Sigmoid colon (tissue), 7 donors: ENCODE measurements at regions of chr2 and their contacts with region 1.

Region 1: DNA sequence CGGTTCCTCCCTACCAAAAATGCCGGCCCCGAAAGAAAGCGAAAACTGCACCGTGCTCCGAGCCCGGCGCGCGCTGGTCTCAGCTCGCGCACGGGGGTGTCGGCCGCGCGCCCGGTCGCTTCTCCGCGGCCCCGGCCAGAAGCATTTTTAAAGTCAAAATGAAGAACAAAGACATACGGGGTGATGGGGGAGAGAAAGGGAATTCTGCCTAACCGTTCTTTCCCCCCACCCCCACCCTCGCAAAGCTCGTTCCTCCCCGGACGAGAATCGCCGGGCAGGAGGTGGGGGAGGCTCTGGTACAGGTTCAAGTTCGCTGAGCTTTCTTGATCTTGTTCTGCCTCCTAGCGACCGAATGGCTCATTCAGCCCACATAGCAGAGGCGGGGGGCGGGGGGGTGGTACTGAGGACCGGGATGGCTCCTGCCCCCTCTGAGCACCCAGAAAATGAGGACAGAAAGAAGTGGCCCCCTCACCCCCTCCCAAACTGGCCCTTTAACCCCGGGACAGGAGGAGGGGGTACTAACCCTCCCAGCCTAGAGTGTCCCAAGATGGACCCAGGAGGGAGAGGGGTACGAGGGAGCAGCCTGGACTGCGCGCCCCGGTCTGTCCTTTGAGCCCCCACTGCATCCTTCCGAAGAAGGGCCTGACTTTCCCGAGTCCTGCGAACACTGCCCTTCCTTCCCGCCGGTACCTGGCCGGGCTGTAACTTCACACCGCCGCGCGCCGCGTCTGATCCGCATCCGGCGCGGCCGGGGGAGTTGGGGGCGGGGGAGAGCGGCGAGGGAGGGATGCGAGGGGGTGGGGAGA is 3.1 kb downstream of the BCL11A start:
- DNase-seq: peak; percentile 89
- H3K4me3 ChIP-seq: peak overlapping the region; percentile 68 to 83 (median 76)
- H3K27ac ChIP-seq: peak overlapping the region; percentile 76 to 95 (median 87)
- H3K4me1 ChIP-seq: peaks cover 0 to 73% (median 48%) of the 10 kb centered on the region in 4 donors
- H3K27me3 ChIP-seq: peaks cover 0 to 34% (median 0%) of the 10 kb centered on the region in 3 donors
- CTCF ChIP-seq: peak in 3 of 4 experiments; percentile 59 to 70 (median 63)
- EP300 ChIP-seq: no peak
- POLR2A ChIP-seq: no peak

Region 2: DNA sequence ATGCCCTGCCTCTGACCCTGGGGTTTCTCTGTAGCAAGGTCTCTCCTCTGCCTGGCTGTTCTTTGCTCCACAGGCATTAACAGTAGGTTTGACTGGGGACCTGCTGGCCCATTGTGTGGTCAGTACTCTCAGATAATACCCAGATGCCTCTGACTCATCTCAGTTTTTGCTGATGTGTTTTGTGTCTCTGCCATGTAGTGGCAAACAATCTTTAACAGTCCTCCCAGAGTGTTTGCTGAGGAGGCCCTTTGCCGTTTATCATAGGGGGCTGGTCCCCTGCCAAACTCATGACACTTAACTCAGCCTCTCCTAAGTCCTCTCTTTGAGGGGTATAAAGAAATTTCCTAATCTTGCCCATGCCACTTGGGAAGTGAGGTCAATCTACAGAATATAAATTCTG is 1515.5 kb before region 1 on chr2:
- intact Hi-C with region 1: loop called (anchors 5 kb)
- DNase-seq: peak; percentile 72
- H3K4me3 ChIP-seq: no peak overlapping the region
- H3K27ac ChIP-seq: peak overlapping the region in 3 of 4 donors; percentile 29 to 71 (median 50)
- H3K4me1 ChIP-seq: peaks cover 2 to 23% (median 15%) of the 10 kb centered on the region in 4 donors
- H3K27me3 ChIP-seq: no peaks in the 10 kb centered on the region
- CTCF ChIP-seq: no peak
- EP300 ChIP-seq: peak in 2 of 4 donors; percentile 47 to 75
- POLR2A ChIP-seq: no peak

Region 3: DNA sequence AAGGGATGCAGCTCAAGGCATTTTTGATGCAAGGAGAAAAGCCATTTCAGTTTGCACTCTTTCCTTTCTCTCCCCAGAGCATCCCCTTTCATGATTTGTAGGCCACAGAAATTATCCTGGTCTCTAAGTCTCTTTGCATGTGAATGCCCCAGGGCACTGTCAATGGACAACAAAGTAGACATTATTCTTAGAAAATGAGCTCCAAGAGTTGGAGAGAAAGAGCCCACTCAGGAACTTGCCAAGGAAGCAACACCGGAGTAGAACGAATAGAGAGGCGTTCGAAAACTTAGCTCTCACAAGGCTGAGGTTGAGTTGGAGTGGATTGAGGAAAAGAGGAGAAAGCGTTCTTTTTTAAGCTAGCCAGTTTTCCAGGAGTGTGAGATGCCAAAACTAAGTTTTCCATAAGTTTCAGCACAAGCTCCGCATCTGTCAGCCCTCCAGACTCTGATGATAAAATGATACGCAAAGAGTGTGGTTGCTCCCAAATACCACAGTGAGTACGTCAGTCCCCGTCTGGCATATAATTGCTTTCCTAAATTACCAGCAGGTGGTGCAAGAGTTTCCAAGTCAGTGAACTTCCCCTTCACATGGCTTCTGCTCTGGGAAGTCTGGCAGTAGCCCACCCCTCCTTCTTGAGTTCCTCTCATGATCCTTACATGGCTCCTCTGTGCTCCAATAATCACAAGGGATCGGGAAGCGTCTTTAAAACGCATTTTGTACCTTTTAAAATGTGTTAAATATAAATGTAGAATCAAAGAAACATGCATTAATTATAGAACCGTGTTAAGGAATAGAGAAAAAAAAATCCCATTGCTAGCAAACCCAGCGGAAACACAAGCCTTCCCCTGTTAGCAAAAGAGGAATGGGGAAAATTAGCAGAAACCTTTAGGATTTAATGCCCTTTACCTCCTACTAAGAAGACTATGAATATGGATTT is 1248.6 kb before region 1 on chr2:
- intact Hi-C with region 1: loop called (anchors 2 kb)
- DNase-seq: peak; percentile 68
- H3K4me3 ChIP-seq: no peak overlapping the region
- H3K27ac ChIP-seq: peak overlapping the region in 2 of 4 donors; percentile 30 to 33
- H3K4me1 ChIP-seq: peaks cover 0 to 16% (median 2%) of the 10 kb centered on the region in 4 donors
- H3K27me3 ChIP-seq: no peaks in the 10 kb centered on the region
- CTCF ChIP-seq: peak; percentile 55 to 63 (median 61)
- EP300 ChIP-seq: no peak
- POLR2A ChIP-seq: no peak

Region 4: GRCh38 chr2:60215386-60215901 is 334.9 kb before region 1 on chr2:
- intact Hi-C with region 1: loop called (anchors 5 kb)
- DNase-seq: peak; percentile 74
- H3K4me3 ChIP-seq: peak overlapping the region in 2 of 4 donors; percentile 3 to 15
- H3K27ac ChIP-seq: peak overlapping the region in 3 of 4 donors; percentile 66 to 76 (median 68)
- H3K4me1 ChIP-seq: peaks cover 0 to 25% (median 17%) of the 10 kb centered on the region in 4 donors
- H3K27me3 ChIP-seq: no peaks in the 10 kb centered on the region
- CTCF ChIP-seq: no peak
- EP300 ChIP-seq: no peak
- POLR2A ChIP-seq: no peak

Region 5: DNA sequence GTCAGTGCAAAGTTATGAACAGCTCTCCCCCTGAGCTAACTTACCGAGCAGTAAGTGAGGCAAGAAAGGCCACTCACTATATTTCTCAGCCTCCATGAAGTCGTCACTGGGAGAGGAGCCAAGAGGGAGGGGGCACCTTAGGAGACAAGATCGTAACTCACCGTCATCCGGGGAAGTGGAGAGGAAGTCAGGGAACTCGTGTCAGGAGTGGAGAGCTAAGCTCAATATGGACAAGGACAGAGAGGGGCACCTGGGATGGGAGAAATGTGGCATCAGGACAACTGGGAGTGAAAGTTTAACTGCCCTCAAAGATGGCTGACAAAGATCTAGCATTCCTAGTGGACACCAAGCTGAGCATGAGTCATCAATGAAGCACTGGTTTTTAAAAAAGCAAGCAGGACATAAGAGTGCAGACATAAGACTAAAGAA is 34.0 kb before region 1 on chr2:
- intact Hi-C with region 1: no loop called
- DNase-seq: peak; percentile 66
- H3K4me3 ChIP-seq: no peak overlapping the region
- H3K27ac ChIP-seq: peak overlapping the region in 3 of 4 donors; percentile 63 to 73 (median 69)
- H3K4me1 ChIP-seq: peaks cover 0 to 46% (median 32%) of the 10 kb centered on the region in 4 donors
- H3K27me3 ChIP-seq: no peaks in the 10 kb centered on the region
- CTCF ChIP-seq: no peak
- EP300 ChIP-seq: no peak
- POLR2A ChIP-seq: no peak

Region 6: GRCh38 chr2:61176755-61177726 is 626.7 kb after region 1 on chr2:
- intact Hi-C with region 1: loop called (anchors 5 kb)
- DNase-seq: peak; percentile 96
- H3K4me3 ChIP-seq: peak overlapping the region; percentile 74 to 94 (median 88)
- H3K27ac ChIP-seq: peak overlapping the region; percentile 97 to 99 (median 98)
- H3K4me1 ChIP-seq: peaks cover 0 to 47% (median 46%) of the 10 kb centered on the region in 4 donors
- H3K27me3 ChIP-seq: no peaks in the 10 kb centered on the region
- CTCF ChIP-seq: no peak
- EP300 ChIP-seq: peak in 2 of 4 donors; percentile 45 to 70
- POLR2A ChIP-seq: peak; percentile 64 to 79